B cell (primary cell): ENCODE measurements at regions of chr20 and their contacts with region 1.

Region 1: DNA sequence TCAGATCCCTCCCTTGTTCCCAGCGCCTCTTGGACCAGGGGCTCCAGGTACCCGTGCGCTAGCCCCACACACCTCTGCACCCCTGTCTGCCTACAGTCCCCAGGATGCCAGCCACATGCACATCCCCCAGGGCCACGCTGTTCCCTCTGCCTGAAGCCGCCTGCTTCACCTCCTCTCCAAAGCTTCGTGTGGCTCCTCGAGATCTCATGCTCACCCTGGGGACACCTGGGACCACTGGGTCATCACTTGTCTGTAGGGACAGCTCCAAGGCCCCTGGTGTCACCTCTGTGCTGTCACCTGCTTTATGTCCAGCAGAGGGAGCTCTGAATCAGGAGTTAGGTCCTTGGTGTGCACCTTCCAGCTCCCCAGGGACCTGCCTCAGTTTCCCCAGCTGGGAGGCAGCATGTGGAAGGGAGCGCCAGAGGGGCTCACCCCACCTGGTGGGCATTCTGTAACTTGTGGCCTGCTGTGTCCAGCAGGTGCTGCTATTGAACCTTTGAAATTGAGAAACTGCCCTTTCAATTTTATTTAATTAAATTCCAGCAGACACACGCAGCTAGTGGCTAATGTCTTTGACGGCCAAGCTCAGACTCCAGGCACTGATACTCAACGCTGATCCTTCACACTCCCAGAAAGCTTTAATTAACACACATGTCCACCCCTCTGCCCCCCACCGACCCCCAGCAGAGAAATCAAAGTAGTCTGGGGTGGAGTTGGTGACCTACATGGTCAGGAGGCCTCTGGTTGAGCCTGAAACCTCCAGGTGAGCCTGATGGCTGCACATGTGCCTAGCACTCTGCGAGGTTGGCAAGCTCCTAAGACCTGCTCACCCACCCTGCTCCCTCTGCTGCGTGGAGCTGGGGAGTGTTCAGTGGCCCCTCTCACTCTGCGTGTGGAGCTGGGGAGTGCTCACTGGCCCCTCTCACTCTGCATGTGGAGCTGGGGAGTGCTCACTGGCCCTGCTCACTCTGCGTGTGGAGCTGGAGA is 7.6 kb upstream of the YTHDF1 start:
- DNase-seq: peak; percentile 61
- ATAC-seq: peak; percentile 65
- H3K4me3 ChIP-seq: no peak overlapping the region
- H3K4me3 Mint-ChIP-seq: no peak overlapping the region
- H3K27ac ChIP-seq: no peak overlapping the region
- H3K27ac Mint-ChIP-seq: no peak overlapping the region
- H3K4me1 ChIP-seq: no peaks in the 10 kb centered on the region
- H3K4me1 Mint-ChIP-seq: no peaks in the 10 kb centered on the region
- H3K27me3 ChIP-seq: peaks cover 0 to 7% (median 0%) of the 10 kb centered on the region in 4 experiments
- H3K27me3 Mint-ChIP-seq: peaks cover 12% of the 10 kb centered on the region
- CTCF ChIP-seq: peak; percentile 79

Region 2: GRCh38 chr20:63198606-63199005 is 24.9 kb before region 1 on chr20:
- CTCF ChIA-PET with region 1: interaction called, 10 read pairs
- POLR2A ChIA-PET with region 1: no interaction called
- intact Hi-C with region 1: no loop called
- DNase-seq: no peak
- ATAC-seq: no peak
- H3K4me3 ChIP-seq: no peak overlapping the region
- H3K4me3 Mint-ChIP-seq: no peak overlapping the region
- H3K27ac ChIP-seq: no peak overlapping the region
- H3K27ac Mint-ChIP-seq: no peak overlapping the region
- H3K4me1 ChIP-seq: no peaks in the 10 kb centered on the region
- H3K4me1 Mint-ChIP-seq: peaks cover 13% of the 10 kb centered on the region
- H3K27me3 ChIP-seq: no peaks in the 10 kb centered on the region
- H3K27me3 Mint-ChIP-seq: no peaks in the 10 kb centered on the region
- CTCF ChIP-seq: no peak

Region 3: DNA sequence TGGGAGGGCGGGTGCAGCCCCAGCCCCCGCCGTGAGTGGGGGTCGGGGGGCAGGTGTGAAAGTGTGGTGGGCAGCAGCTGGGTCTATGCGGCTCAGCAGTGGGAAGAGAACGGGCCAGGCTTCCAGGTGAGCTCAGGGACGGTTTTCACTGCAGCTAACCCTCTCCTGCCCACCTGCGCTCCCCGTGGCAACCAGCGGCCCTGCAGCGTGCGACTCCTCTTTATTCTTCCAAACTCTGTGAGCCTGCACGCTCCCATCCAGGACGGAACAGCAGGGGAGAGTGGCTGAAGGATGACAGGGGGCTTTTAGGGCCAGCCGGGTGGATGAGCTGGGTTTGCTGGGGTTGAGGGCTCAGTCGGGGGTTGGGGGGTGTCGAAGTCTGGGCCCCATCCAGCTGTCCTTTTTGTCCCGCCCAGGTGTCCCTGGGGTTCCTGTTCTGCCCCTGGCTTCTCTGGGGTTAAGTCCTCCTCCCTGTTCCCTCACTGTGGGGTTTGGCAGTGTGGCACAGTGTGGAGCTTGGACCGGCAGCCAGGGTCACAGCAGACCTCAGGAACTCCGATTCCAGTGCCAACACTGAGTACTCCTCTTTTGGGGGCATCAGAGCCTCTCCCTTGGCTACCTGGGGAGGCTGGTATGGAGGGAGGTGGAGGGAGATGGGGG is 11.4 kb after region 1 on chr20:
- CTCF ChIA-PET with region 1: interaction called, 35 read pairs
- POLR2A ChIA-PET with region 1: interaction called, 9 read pairs
- intact Hi-C with region 1: no loop called
- DNase-seq: no peak
- ATAC-seq: peak; percentile 36
- H3K4me3 ChIP-seq: no peak overlapping the region
- H3K4me3 Mint-ChIP-seq: no peak overlapping the region
- H3K27ac ChIP-seq: no peak overlapping the region
- H3K27ac Mint-ChIP-seq: peak overlapping the region; percentile 10
- H3K4me1 ChIP-seq: peaks cover 0 to 4% of the 10 kb centered on the region in 2 donors
- H3K4me1 Mint-ChIP-seq: peaks cover 3% of the 10 kb centered on the region
- H3K27me3 ChIP-seq: peaks cover 0 to 39% (median 13%) of the 10 kb centered on the region in 4 experiments
- H3K27me3 Mint-ChIP-seq: peaks cover 30% of the 10 kb centered on the region
- CTCF ChIP-seq: peak; percentile 21

Region 4: DNA sequence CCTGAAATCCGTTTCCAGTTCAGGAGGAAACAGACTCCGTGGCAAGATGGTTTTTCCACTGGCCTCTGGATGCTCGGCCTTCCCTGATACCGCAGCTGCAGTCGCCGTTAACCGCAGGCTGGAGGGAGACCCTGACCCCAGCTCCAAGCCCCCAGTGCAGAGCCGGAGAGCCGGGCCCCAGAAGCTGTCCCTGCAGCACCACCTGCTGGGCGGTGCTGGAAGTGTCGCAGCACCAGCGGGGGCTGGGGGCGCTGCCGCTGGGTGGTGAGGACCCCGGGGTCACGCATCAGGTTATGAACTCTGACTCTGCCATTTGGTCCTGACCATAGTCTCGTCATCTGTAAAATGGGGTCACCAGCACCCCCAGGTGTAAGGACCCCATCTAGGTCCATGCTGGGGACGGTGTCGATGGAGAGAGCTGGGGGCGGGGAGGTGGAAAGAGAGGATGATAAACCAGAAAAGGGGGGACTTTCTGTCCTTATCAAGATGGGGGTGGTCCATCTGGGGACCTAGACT is 158.4 kb after region 1 on chr20:
- CTCF ChIA-PET with region 1: interaction called, 21 read pairs
- POLR2A ChIA-PET with region 1: no interaction called
- intact Hi-C with region 1: no loop called
- DNase-seq: peak; percentile 50
- ATAC-seq: peak; percentile 36
- H3K4me3 ChIP-seq: no peak overlapping the region
- H3K4me3 Mint-ChIP-seq: no peak overlapping the region
- H3K27ac ChIP-seq: no peak overlapping the region
- H3K27ac Mint-ChIP-seq: no peak overlapping the region
- H3K4me1 ChIP-seq: no peaks in the 10 kb centered on the region
- H3K4me1 Mint-ChIP-seq: no peaks in the 10 kb centered on the region
- H3K27me3 ChIP-seq: peaks cover 0 to 23% (median 0%) of the 10 kb centered on the region in 4 experiments
- H3K27me3 Mint-ChIP-seq: peaks cover 17% of the 10 kb centered on the region
- CTCF ChIP-seq: peak; percentile 86

Region 5: GRCh38 chr20:63627129-63627750 is 403.7 kb after region 1 on chr20:
- CTCF ChIA-PET with region 1: no interaction called
- POLR2A ChIA-PET with region 1: no interaction called
- intact Hi-C with region 1: no loop called
- DNase-seq: peak; percentile 98
- ATAC-seq: peak; percentile 78
- H3K4me3 ChIP-seq: peak overlapping the region; percentile 38 to 90 (median 87)
- H3K4me3 Mint-ChIP-seq: peak overlapping the region; percentile 95
- H3K27ac ChIP-seq: peak overlapping the region; percentile 75 to 84
- H3K27ac Mint-ChIP-seq: peak overlapping the region; percentile 93
- H3K4me1 ChIP-seq: peaks cover 33 to 47% of the 10 kb centered on the region in 2 donors
- H3K4me1 Mint-ChIP-seq: peaks cover 37% of the 10 kb centered on the region
- H3K27me3 ChIP-seq: no peaks in the 10 kb centered on the region
- H3K27me3 Mint-ChIP-seq: no peaks in the 10 kb centered on the region
- CTCF ChIP-seq: no peak